Mammary epithelial cell (primary cell): ENCODE measurements at regions of chr16 and their contacts with region 1.

Region 1: GRCh38 chr16:53172517-53172916 is 117.7 kb downstream of the CHD9 start:
- DNase-seq: no peak
- H3K4me3 ChIP-seq: no peak overlapping the region
- H3K27ac ChIP-seq: no peak overlapping the region
- H3K4me1 ChIP-seq: no peaks in the 10 kb centered on the region
- H3K27me3 ChIP-seq: no peaks in the 10 kb centered on the region
- CTCF ChIP-seq: no peak

Region 2: GRCh38 chr16:53207810-53208752 is 35.6 kb after region 1 on chr16:
- CTCF ChIA-PET with region 1: no interaction called
- dilution Hi-C with region 1: no loop called
- in situ Hi-C with region 1: no loop called
- intact Hi-C with region 1: loop called (anchors 5 kb)
- DNase-seq: peak; percentile 82
- H3K4me3 ChIP-seq: peak overlapping the region; percentile 57 to 79 (median 63)
- H3K27ac ChIP-seq: peak overlapping the region; percentile 90
- H3K4me1 ChIP-seq: peaks cover 9% of the 10 kb centered on the region
- H3K27me3 ChIP-seq: no peaks in the 10 kb centered on the region
- CTCF ChIP-seq: peak; percentile 55 to 60

Region 3: DNA sequence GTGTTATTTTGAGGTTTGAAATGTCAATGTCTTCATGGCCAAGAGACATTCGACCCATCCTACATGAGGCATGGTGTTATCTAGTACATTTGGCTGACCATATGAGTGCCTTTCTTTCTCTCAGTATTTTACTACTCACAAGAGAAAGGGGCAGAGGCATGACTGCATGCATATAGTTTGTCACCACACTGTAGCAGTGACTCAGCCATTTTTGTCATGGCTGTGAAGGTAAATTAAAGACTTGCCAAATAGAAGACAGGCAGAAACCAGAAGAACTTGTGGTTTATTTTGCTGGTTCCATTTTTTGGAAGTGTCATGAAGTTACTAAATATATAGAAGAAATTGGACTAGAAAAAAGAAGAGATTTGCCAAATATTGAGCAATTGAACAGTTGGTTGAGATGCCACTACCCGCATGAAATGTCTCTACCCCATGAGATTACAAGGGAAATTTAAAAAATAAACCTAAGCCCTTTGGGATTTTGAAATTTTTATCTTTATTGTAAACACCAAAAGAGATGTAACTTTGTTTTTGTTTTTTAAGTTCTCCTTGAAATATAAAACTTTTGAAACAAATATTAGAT is 52.5 kb after region 1 on chr16:
- CTCF ChIA-PET with region 1: no interaction called
- dilution Hi-C with region 1: no loop called
- in situ Hi-C with region 1: no loop called
- intact Hi-C with region 1: no loop called
- DNase-seq: peak; percentile 39
- H3K4me3 ChIP-seq: no peak overlapping the region
- H3K27ac ChIP-seq: no peak overlapping the region
- H3K4me1 ChIP-seq: no peaks in the 10 kb centered on the region
- H3K27me3 ChIP-seq: no peaks in the 10 kb centered on the region
- CTCF ChIP-seq: no peak